ENCODE measurements at regions of chr16 and their contacts with region 1.

Region 1: GRCh38 chr16:68064791-68065365 is 20.3 kb upstream of the NFATC3 start:
- DNase-seq: peak; percentile 83
- H3K4me3 Mint-ChIP-seq: no peak overlapping the region
- H3K27ac Mint-ChIP-seq: peak overlapping the region; percentile 74
- H3K4me1 Mint-ChIP-seq: peaks cover 57% of the 10 kb centered on the region
- H3K27me3 Mint-ChIP-seq: no peaks in the 10 kb centered on the region

Region 2: GRCh38 chr16:67993189-67994039 is 71.5 kb before region 1 on chr16:
- CTCF ChIA-PET with region 1: interaction called, 4 read pairs
- POLR2A ChIA-PET with region 1: no interaction called
- intact Hi-C with region 1: loop called (anchors 2 kb)
- DNase-seq: peak; percentile 90
- H3K4me3 Mint-ChIP-seq: peak overlapping the region; percentile 73
- H3K27ac Mint-ChIP-seq: peak overlapping the region; percentile 94
- H3K4me1 Mint-ChIP-seq: peaks cover 37% of the 10 kb centered on the region
- H3K27me3 Mint-ChIP-seq: no peaks in the 10 kb centered on the region

Region 3: GRCh38 chr16:68074850-68075555 is 10.1 kb after region 1 on chr16:
- CTCF ChIA-PET with region 1: interaction called, 24 read pairs
- POLR2A ChIA-PET with region 1: interaction called, 14 read pairs
- intact Hi-C with region 1: no loop called
- DNase-seq: peak; percentile 84
- H3K4me3 Mint-ChIP-seq: no peak overlapping the region
- H3K27ac Mint-ChIP-seq: peak overlapping the region; percentile 87
- H3K4me1 Mint-ChIP-seq: peaks cover 76% of the 10 kb centered on the region
- H3K27me3 Mint-ChIP-seq: no peaks in the 10 kb centered on the region

Region 4: GRCh38 chr16:68264128-68265077 is 199.5 kb after region 1 on chr16 and contains the start of gene SLC7A6:
- CTCF ChIA-PET with region 1: no interaction called
- POLR2A ChIA-PET with region 1: no interaction called
- intact Hi-C with region 1: no loop called
- DNase-seq: peak; percentile 92
- H3K4me3 Mint-ChIP-seq: peak within 1 kb of the TSS; percentile 96
- H3K27ac Mint-ChIP-seq: peak within 1 kb of the TSS; percentile 95
- H3K4me1 Mint-ChIP-seq: peaks cover 43% of the 10 kb centered on the region
- H3K27me3 Mint-ChIP-seq: no peaks in the 10 kb centered on the region
- total RNA-seq, gene SLC7A6: 62.8 to 63.8 TPM